Posterior vena cava (tissue), 2 donors: ENCODE measurements at regions of chr6 and their contacts with region 1.

Region 1: DNA sequence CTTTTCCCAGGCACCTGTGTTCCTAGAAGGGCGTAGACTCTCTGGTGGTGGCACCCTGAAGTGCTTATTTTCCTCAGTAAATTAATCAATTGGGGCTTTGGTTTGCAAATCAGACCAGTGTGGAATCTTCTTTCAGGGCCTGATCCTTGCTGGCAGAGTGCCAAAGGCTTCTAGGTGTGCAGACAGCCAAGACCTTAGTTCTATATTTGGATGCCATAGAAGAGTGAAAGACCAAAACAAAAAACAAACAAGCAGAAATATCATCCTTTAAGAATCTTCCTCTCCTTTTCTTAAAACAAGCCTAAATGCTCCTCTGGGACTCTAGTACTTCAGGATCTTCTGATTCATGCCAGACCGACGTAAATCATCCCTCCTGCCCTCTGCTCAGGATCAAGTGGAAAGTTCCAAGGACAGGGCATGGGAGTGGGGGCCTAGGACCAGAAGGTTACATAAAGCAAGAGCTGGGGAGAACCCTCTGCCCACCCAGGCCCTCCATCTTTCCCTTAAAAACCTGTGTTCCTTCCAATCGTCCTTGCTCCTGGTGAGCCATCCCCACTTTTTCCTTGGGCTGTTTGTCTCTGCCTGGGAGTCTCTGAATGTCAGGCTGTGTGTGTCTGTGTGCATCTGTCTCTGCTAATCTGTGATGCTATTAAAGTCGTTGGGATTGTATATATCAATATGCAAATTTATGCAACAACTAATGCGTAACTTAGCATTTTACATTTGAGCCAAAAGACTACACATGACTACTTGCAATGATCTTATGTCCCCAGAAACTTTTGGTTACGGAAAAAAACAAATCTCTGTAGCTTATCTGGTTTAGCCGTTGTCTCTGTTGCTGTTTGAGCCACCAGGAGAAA is 70.4 kb upstream of the MYLIP start:
- DNase-seq: no peak

Region 2: GRCh38 chr6:14499841-14500240 is 1558.6 kb before region 1 on chr6:
- intact Hi-C with region 1: loop called in 1 of 2 experiments (anchors 5 kb)
- DNase-seq: no peak

Region 3: GRCh38 chr6:16031278-16031981 is 27.0 kb before region 1 on chr6:
- intact Hi-C with region 1: no loop called
- DNase-seq: no peak